ENCODE measurements at regions of chr22 and their contacts with region 1.

Region 1: GRCh38 chr22:37817705-37818408 is 5.3 kb upstream of the GALR3 start:
- DNase-seq: no peak
- ATAC-seq: peak; percentile 93
- H3K4me3 ChIP-seq: no peak overlapping the region
- H3K27ac ChIP-seq: peak overlapping the region; percentile 27; the same call in 1 of the 2 replicates
- H3K4me1 ChIP-seq: peaks cover 4 to 9% of the 10 kb centered on the region in 2 experiments; a peak in 3 of 4 replicates
- H3K27me3 ChIP-seq: no peaks in the 10 kb centered on the region
- CTCF ChIP-seq: peak; percentile 84 to 93 (median 87)
- POLR2A ChIP-seq: no peak
- RAD21 ChIP-seq: peak; percentile 93

Region 2: DNA sequence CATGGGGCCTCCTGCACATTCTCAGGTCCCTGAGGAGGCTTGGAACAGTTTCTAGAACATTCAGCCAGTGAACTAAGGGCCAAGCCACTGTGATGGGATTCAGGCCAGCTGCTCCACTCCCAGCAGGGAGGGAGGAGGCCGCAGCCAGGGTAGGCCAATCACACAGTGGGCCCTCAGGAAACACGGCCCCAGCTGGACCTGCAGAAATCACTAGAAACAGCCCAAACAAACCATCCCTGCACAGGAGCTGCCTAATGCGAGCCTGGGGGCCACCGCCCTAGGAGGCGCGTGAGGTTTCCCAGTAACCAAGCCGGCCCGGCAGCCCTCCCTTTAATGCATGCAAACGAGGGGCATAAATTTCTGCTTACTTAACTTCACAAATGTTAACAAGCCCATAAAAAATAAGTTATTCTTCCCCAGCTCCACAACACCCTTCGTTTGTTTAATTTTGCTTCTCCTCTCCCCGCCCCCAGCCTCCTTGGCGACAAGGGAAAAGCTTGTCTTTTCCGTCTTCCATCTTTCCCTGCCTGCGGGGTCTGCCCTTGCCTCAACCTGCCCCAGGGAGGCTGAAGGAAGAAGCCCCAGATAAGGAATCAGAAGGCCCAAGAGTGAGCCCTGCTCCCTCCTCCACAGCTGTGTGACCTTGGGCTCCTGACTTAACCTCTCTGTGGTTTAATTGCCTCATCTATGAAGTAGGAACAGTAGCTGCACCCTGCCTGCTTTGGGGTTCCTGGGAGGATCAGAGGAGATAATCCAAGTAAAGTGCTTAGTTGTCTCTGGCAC is 416.3 kb before region 1 on chr22:
- CTCF ChIA-PET with region 1: no interaction called
- POLR2A ChIA-PET with region 1: no interaction called
- RAD21 ChIA-PET with region 1: no interaction called
- intact Hi-C with region 1: no loop called
- DNase-seq: no peak
- ATAC-seq: no peak
- H3K4me3 ChIP-seq: no peak overlapping the region
- H3K27ac ChIP-seq: peak overlapping the region; percentile 4; the same call in 1 of the 2 replicates
- H3K4me1 ChIP-seq: peaks cover 13 to 22% of the 10 kb centered on the region in 2 experiments; a peak in 3 of 4 replicates
- H3K27me3 ChIP-seq: no peaks in the 10 kb centered on the region
- CTCF ChIP-seq: no peak
- POLR2A ChIP-seq: no peak
- RAD21 ChIP-seq: no peak

Region 3: DNA sequence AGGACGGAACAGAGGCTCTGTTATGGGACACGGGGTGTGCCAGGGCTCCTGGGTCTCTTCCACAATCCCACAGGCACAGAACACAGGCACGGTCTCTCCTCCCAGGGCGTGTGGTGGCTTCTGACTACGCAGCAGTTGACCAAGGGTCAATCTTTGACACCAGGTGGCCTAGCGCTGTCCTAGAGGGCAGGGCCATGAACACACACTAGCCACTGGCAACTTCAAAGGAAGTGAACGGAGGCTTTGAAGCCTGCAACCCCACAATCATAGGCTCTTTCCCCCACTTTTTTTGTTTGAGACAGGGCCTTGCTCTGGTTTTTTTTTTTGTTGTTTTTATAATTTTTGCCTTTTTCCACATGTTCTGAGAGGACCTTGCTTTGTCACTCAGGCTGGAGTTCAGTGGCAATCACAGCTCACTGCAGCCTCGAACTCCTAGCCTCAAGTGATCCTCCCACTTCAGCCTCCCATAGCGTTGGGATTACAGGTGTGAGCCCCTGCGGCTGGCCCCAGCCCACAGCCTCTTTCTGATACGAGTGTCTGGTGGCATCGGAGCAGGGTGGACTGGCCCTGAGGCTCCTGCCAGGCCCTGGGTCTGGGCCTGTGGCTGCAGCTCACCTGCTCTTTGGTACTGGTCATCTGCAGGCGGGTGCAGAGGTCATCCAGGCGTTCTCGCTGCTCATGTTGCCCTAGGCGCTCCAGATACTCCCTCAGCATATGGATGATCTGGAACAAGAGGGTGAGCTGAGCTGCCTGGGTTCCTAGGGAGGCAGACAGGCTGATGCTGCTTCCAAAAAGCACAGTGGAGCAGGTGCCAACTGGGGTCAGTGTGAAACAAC is 14.4 kb after region 1 on chr22:
- CTCF ChIA-PET with region 1: no interaction called
- POLR2A ChIA-PET with region 1: no interaction called
- RAD21 ChIA-PET with region 1: no interaction called
- intact Hi-C with region 1: no loop called
- DNase-seq: no peak
- ATAC-seq: no peak
- H3K4me3 ChIP-seq: no peak overlapping the region
- H3K27ac ChIP-seq: no peak overlapping the region
- H3K4me1 ChIP-seq: no peaks in the 10 kb centered on the region
- H3K27me3 ChIP-seq: no peaks in the 10 kb centered on the region
- CTCF ChIP-seq: no peak
- POLR2A ChIP-seq: no peak
- RAD21 ChIP-seq: no peak

Region 4: GRCh38 chr22:37862570-37863325 is 44.9 kb after region 1 on chr22:
- CTCF ChIA-PET with region 1: interaction called, 33 read pairs
- POLR2A ChIA-PET with region 1: interaction called, 4 read pairs
- RAD21 ChIA-PET with region 1: interaction called in 1 of 2 experiments, 5 read pairs
- intact Hi-C with region 1: loop called (anchors 1 kb)
- DNase-seq: no peak
- ATAC-seq: peak; percentile 18
- H3K4me3 ChIP-seq: no peak overlapping the region
- H3K27ac ChIP-seq: no peak overlapping the region
- H3K4me1 ChIP-seq: peaks cover 0 to 5% of the 10 kb centered on the region in 2 experiments; a peak in 2 of 4 replicates
- H3K27me3 ChIP-seq: no peaks in the 10 kb centered on the region
- CTCF ChIP-seq: no peak
- POLR2A ChIP-seq: no peak
- RAD21 ChIP-seq: no peak

Region 5: GRCh38 chr22:37965940-37966664 is 148.2 kb after region 1 on chr22:
- CTCF ChIA-PET with region 1: interaction called, 14 read pairs
- POLR2A ChIA-PET with region 1: no interaction called
- RAD21 ChIA-PET with region 1: interaction called in 1 of 2 experiments, 4 read pairs
- intact Hi-C with region 1: loop called (anchors 1 kb)
- DNase-seq: no peak
- ATAC-seq: no peak
- H3K4me3 ChIP-seq: no peak overlapping the region
- H3K27ac ChIP-seq: no peak overlapping the region
- H3K4me1 ChIP-seq: peaks cover 0 to 11% of the 10 kb centered on the region in 2 experiments; a peak in 2 of 4 replicates
- H3K27me3 ChIP-seq: no peaks in the 10 kb centered on the region
- CTCF ChIP-seq: no peak
- POLR2A ChIP-seq: no peak
- RAD21 ChIP-seq: no peak

Measured in HCT116 (cell line).